Natural killer cell (primary cell): ENCODE measurements at regions of chrX and their contacts with region 1.

Region 1: GRCh38 chrX:78555401-78555980 is 103.6 kb downstream of the RTL3 start:
- DNase-seq: peak in 1 of 2 donors; percentile 54
- ATAC-seq: peak in 2 of 3 donors; percentile 40 to 52
- H3K4me3 ChIP-seq: no peak overlapping the region
- H3K4me3 Mint-ChIP-seq: no peak overlapping the region
- H3K27ac ChIP-seq: no peak overlapping the region
- H3K27ac Mint-ChIP-seq: no peak overlapping the region
- H3K4me1 ChIP-seq: no peaks in the 10 kb centered on the region
- H3K4me1 Mint-ChIP-seq: peaks cover 4 to 5% of the 10 kb centered on the region in 2 donors
- H3K27me3 ChIP-seq: no peaks in the 10 kb centered on the region
- H3K27me3 Mint-ChIP-seq: no peaks in the 10 kb centered on the region
- CTCF ChIP-seq: peak; percentile 50

Region 2: DNA sequence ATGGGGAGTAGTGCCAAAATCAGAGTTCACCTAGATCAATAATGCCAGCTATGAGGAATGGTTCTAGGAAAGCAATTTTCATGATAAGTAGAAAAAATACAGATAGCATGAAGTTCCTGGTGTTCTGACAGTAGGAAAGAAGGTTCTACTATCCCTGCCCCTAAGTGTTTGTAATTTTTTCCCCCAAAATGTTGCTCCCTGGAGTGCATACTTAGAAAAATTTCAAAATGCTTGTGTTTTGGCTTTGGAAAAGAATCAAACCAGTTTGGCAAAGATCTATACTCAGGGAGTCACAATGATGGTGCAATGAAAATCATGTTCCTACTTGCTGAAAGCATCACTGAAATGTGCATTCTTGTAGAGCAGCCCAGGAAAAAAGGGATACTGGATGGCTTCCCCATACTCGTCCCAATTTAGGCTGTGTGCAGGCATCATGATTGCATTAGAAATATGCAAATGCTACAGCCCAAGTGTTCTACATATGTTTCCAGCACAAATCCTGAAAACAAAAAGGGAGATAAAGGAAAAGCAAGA is 266.7 kb after region 1 on chrX:
- intact Hi-C with region 1: no loop called
- DNase-seq: no peak
- ATAC-seq: no peak
- H3K4me3 ChIP-seq: no peak overlapping the region
- H3K4me3 Mint-ChIP-seq: no peak overlapping the region
- H3K27ac ChIP-seq: no peak overlapping the region
- H3K27ac Mint-ChIP-seq: no peak overlapping the region
- H3K4me1 ChIP-seq: no peaks in the 10 kb centered on the region
- H3K4me1 Mint-ChIP-seq: no peaks in the 10 kb centered on the region
- H3K27me3 ChIP-seq: no peaks in the 10 kb centered on the region
- H3K27me3 Mint-ChIP-seq: peaks cover 0 to 14% of the 10 kb centered on the region in 2 donors
- CTCF ChIP-seq: no peak

Region 3: DNA sequence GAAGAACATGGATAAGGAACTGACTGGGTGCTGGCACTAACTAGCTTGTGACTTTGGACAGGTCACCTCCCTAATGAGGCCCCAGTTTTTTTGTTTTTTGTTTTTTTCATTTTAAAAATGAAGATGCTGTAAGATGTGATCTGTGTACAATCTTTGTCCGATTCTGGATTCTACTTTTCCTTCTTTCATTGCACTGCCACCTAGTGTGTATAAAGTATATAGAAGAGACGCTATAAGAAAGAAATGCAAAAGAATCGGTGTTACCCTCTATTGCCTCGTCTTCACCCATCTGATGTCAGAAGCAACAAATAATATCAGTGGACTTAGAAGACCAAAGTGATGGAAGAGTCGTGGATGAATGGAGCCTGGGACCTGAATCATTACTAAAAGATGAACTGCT is 331.1 kb after region 1 on chrX:
- intact Hi-C with region 1: loop called (anchors 1 kb)
- DNase-seq: peak in 1 of 2 donors; percentile 46
- ATAC-seq: peak in 1 of 3 donors; percentile 61
- H3K4me3 ChIP-seq: no peak overlapping the region
- H3K4me3 Mint-ChIP-seq: no peak overlapping the region
- H3K27ac ChIP-seq: no peak overlapping the region
- H3K27ac Mint-ChIP-seq: no peak overlapping the region
- H3K4me1 ChIP-seq: no peaks in the 10 kb centered on the region
- H3K4me1 Mint-ChIP-seq: peaks cover 9% of the 10 kb centered on the region in 2 donors
- H3K27me3 ChIP-seq: no peaks in the 10 kb centered on the region
- H3K27me3 Mint-ChIP-seq: peaks cover 0 to 11% of the 10 kb centered on the region in 2 donors
- CTCF ChIP-seq: peak; percentile 35

Region 4: DNA sequence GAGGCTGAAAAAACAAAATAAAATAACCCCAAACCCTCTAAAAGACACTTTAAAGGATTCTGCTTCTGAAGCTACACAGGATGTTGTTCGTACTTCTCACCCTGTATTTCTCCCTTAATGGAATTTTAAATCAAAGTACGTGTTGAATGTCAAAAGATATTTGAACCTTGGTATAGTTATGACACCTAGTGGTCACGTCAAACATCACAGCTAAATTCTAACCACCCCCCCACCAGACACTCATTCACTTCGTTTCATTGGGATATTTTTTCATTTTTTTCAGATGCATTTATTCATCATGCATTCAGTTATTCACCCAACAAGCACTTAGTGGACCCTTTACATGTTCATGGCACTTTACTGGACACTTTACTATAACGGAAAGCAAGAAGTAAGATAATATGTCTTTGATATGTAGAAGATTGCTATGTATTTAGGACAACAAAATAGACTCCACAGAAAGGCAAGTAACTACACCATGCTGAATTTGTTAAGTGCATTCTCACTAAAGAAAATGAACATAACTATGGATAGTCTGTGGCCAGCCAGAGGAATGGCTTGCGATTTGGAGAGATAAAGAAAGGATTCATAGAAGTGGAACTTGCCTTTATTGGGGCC is 526.5 kb after region 1 on chrX:
- intact Hi-C with region 1: loop called (anchors 2 kb)
- DNase-seq: peak in 1 of 2 donors; percentile 79
- ATAC-seq: peak; percentile 69 to 88 (median 87)
- H3K4me3 ChIP-seq: no peak overlapping the region
- H3K4me3 Mint-ChIP-seq: no peak overlapping the region
- H3K27ac ChIP-seq: no peak overlapping the region
- H3K27ac Mint-ChIP-seq: peak overlapping the region in 1 of 2 donors; percentile 4
- H3K4me1 ChIP-seq: no peaks in the 10 kb centered on the region
- H3K4me1 Mint-ChIP-seq: peaks cover 7 to 11% of the 10 kb centered on the region in 2 donors
- H3K27me3 ChIP-seq: no peaks in the 10 kb centered on the region
- H3K27me3 Mint-ChIP-seq: no peaks in the 10 kb centered on the region
- CTCF ChIP-seq: peak; percentile 59

Region 5: DNA sequence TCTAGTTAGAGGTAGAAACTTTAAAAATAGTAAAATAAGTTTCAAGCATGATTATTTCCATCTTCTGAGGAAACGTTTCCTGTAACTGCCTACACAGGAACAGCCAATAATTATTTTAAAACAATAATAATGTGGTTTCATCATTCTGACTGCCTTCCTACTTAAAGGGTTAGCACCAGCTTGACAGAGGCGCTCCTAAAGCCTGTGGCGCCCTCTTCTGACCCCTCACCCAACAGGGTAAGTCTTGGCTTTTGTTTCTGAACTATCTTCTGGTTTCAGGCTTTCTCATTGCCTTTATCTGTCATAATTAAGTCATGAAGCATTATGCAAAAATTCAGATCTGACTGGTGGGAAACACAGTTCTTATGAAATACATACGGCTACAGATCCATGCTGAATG is 714.9 kb after region 1 on chrX:
- intact Hi-C with region 1: loop called (anchors 1 kb)
- DNase-seq: peak; percentile 42 to 86
- ATAC-seq: peak; percentile 84 to 98 (median 91)
- H3K4me3 ChIP-seq: no peak overlapping the region
- H3K4me3 Mint-ChIP-seq: no peak overlapping the region
- H3K27ac ChIP-seq: no peak overlapping the region
- H3K27ac Mint-ChIP-seq: peak overlapping the region in 1 of 2 donors; percentile 61
- H3K4me1 ChIP-seq: peaks cover 2% of the 10 kb centered on the region
- H3K4me1 Mint-ChIP-seq: peaks cover 20 to 29% of the 10 kb centered on the region in 2 donors
- H3K27me3 ChIP-seq: no peaks in the 10 kb centered on the region
- H3K27me3 Mint-ChIP-seq: peaks cover 0 to 8% of the 10 kb centered on the region in 2 donors
- CTCF ChIP-seq: peak; percentile 72

Region 6: DNA sequence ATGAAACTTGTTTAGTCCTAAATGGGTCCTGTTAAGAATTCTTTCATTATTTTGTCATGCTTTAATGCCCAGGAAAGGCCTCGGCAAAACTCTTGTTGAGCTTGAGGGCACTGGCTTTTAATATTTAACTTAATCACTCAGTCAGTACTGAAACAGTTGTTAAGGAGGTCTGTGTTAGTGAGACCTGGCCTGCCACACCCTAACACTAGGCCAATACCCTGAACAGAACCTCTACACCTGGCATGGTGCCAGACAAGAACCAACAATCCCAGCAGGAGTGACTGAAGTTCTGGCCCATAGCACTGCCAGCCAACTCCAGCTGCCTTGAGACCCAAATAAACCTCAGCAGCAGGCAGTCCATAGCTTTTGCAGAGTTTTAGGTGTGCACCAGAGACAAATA is 897.4 kb after region 1 on chrX:
- intact Hi-C with region 1: loop called (anchors 10 kb)
- DNase-seq: no peak
- ATAC-seq: no peak
- H3K4me3 ChIP-seq: no peak overlapping the region
- H3K4me3 Mint-ChIP-seq: no peak overlapping the region
- H3K27ac ChIP-seq: no peak overlapping the region
- H3K27ac Mint-ChIP-seq: no peak overlapping the region
- H3K4me1 ChIP-seq: no peaks in the 10 kb centered on the region
- H3K4me1 Mint-ChIP-seq: peaks cover 10 to 16% of the 10 kb centered on the region in 2 donors
- H3K27me3 ChIP-seq: no peaks in the 10 kb centered on the region
- H3K27me3 Mint-ChIP-seq: peaks cover 0 to 5% of the 10 kb centered on the region in 2 donors
- CTCF ChIP-seq: no peak